Activated T-helper 2 cell treated with anti-CD3 and anti-CD28 coated beads, Interferon-gamma antibody, Interleukin-2, Interleukin-4, amounts not matched to agents 10 μg/mL and 5 μg/mL and 100 μg/mL, durations not matched to agents 14 hours and 24 hours and 36 hours (primary cell): ENCODE measurements at regions of chr11 and their contacts with region 1.

Region 1: GRCh38 chr11:15101072-15101709 is 13.5 kb upstream of the INSC start:
- DNase-seq: peak; percentile 26
- H3K4me3 Mint-ChIP-seq: no peak overlapping the region
- H3K27ac Mint-ChIP-seq: no peak overlapping the region
- H3K4me1 Mint-ChIP-seq: no peaks in the 10 kb centered on the region
- H3K27me3 Mint-ChIP-seq: peaks cover 32% of the 10 kb centered on the region

Region 2: GRCh38 chr11:15159085-15159484 is 57.9 kb after region 1 on chr11:
- intact Hi-C with region 1: loop called (anchors 2 kb)
- DNase-seq: no peak
- H3K4me3 Mint-ChIP-seq: no peak overlapping the region
- H3K27ac Mint-ChIP-seq: no peak overlapping the region
- H3K4me1 Mint-ChIP-seq: no peaks in the 10 kb centered on the region
- H3K27me3 Mint-ChIP-seq: peaks cover 12% of the 10 kb centered on the region

Region 3: DNA sequence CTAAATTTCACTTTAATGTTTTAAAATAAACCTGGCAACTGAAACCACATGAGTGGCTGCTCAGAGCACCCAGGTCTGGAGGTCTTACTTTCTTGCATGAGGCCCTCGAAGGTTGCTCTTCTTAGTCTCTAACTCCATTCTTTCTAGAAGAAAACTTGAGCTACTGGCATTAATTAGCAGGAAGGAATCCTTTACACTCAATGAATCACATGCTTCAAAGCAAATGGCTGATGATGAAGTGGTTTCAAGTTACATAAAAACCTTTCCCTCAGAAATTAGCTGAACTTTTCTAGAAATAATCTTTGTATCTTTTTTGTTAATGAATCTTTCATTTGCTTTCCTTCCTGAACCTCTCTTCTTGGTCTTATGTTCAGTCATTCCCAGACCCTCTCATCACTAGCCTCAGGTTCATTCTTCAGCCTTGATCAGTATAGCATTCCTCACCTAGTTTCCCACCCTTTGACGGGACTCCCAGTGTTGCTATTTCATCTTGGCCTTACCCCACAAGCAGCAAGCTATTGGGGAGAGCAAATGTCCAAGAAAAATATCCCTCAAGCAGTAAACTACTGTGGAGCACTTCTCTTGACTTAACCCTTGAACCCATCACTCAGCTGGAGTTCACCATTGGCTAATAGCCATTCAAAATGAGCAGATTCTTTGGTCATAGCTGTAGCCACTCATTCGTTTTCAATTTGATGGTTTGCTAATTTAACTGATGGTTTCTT is 88.6 kb after region 1 on chr11:
- intact Hi-C with region 1: no loop called
- DNase-seq: no peak
- H3K4me3 Mint-ChIP-seq: no peak overlapping the region
- H3K27ac Mint-ChIP-seq: no peak overlapping the region
- H3K4me1 Mint-ChIP-seq: no peaks in the 10 kb centered on the region
- H3K27me3 Mint-ChIP-seq: peaks cover 8% of the 10 kb centered on the region

Region 4: DNA sequence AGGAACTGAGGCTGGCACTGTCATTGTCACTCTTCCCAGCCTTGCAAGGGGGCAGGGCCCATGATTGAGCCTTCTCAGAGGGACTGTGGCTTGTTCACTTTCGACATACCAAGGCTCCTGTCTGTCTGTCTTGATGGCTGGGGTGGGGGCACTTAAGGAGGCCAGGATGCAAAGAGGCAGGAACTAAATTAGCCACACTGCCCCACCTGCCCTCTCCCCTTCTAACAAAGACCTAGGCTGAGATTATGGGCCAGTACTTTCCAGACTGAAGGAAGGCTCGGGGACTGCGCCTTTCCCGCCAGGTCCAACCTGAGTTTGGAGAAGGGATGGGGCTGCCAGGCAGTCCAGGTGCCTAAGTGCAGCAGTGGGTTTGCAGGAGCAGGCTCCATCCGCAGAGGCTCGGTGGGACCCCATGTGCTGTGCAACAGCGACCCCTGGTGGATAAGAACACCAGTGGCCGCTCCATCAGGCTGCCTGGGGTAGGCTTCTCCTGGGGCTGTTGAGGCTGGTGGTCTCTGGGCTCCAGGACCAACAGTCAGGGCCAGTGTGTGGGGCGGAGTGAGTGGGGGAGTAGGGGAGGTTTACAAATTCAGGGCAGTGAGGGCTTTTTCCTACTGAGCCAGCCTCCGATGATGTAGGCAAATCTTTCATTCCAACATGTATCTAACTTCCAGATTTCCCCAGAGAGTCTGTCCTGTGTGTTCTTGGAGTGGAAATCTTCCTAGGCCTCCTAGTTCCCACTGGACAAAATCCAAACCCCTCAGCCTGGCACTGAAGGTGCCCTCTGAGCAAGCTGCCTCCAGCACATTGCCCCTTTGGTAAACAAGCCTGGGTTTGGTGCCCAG is 107.4 kb after region 1 on chr11:
- intact Hi-C with region 1: loop called (anchors 1 kb)
- DNase-seq: peak; percentile 57
- H3K4me3 Mint-ChIP-seq: no peak overlapping the region
- H3K27ac Mint-ChIP-seq: no peak overlapping the region
- H3K4me1 Mint-ChIP-seq: no peaks in the 10 kb centered on the region
- H3K27me3 Mint-ChIP-seq: peaks cover 8% of the 10 kb centered on the region